ENCODE measurements at regions of chr9 and their contacts with region 1.

Region 1: DNA sequence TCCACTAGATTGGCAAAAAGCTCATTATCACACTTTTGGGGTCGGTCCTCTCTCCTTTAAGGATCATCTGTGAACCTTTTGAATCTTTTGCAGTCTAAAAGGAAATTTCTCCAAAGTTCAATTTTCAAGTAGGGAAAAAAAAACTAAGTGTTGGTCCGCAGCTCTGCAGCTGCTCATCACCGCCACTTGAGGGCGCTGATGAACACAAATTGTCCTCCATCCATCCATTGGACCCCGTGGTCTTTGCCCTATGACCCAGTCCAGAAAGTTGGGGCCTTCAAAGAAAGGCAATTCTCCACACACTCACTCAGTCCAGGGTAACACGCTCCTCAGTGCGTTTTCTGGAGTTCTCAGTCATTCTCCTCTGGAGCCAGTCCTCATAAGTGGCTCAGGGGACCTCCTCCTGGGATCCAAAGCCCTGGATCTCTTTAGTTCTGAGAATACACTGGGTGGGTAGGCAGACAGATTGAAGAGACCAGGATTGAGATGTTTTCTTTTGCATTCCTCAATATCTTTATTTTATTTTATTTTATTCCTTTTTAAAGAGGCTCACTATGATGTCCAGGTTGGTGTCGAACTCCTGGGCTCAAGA is 63.6 kb upstream of the SLC28A3 start:
- DNase-seq: peak; percentile 32 to 48 (median 40)
- ATAC-seq: peak; percentile 77
- H3K4me3 ChIP-seq: no peak overlapping the region
- H3K27ac ChIP-seq: no peak overlapping the region
- H3K4me1 ChIP-seq: no peaks in the 10 kb centered on the region
- H3K27me3 ChIP-seq: no peaks in the 10 kb centered on the region
- CTCF ChIP-seq: peak; percentile 53 to 78 (median 70); a peak in 5 of 6 replicates
- EP300 ChIP-seq: no peak
- POLR2A ChIP-seq: no peak
- RAD21 ChIP-seq: peak; percentile 59 to 67

Region 2: GRCh38 chr9:84461540-84461939 is 57.3 kb after region 1 on chr9:
- CTCF ChIA-PET with region 1: no interaction called
- POLR2A ChIA-PET with region 1: interaction called, 3 read pairs
- in situ Hi-C with region 1: no loop called
- intact Hi-C with region 1: loop called (anchors 5 kb)
- DNase-seq: no peak
- ATAC-seq: no peak
- H3K4me3 ChIP-seq: no peak overlapping the region
- H3K27ac ChIP-seq: no peak overlapping the region
- H3K4me1 ChIP-seq: no peaks in the 10 kb centered on the region
- H3K27me3 ChIP-seq: no peaks in the 10 kb centered on the region
- CTCF ChIP-seq: no peak
- EP300 ChIP-seq: no peak
- POLR2A ChIP-seq: no peak
- RAD21 ChIP-seq: peak; percentile 19 to 43; a peak in 2 of 4 replicates

Region 3: GRCh38 chr9:84781458-84781857 is 377.3 kb after region 1 on chr9:
- CTCF ChIA-PET with region 1: no interaction called
- POLR2A ChIA-PET with region 1: no interaction called
- in situ Hi-C with region 1: no loop called
- intact Hi-C with region 1: loop called (anchors 10 kb)
- DNase-seq: peak in 2 of 4 experiments; percentile 3 to 5
- ATAC-seq: no peak
- H3K4me3 ChIP-seq: no peak overlapping the region
- H3K27ac ChIP-seq: no peak overlapping the region
- H3K4me1 ChIP-seq: no peaks in the 10 kb centered on the region
- H3K27me3 ChIP-seq: no peaks in the 10 kb centered on the region
- CTCF ChIP-seq: peak in 2 of 3 experiments; percentile 12 to 28; a peak in 2 of 6 replicates
- EP300 ChIP-seq: no peak
- POLR2A ChIP-seq: no peak
- RAD21 ChIP-seq: peak; percentile 24 to 41

Region 4: GRCh38 chr9:84953797-84954705 is 549.9 kb after region 1 on chr9:
- CTCF ChIA-PET with region 1: no interaction called
- POLR2A ChIA-PET with region 1: no interaction called
- in situ Hi-C with region 1: loop called (anchors 25 kb)
- intact Hi-C with region 1: loop called (anchors 5 kb)
- DNase-seq: peak; percentile 61 to 80 (median 74)
- ATAC-seq: peak; percentile 99
- H3K4me3 ChIP-seq: no peak overlapping the region
- H3K27ac ChIP-seq: no peak overlapping the region
- H3K4me1 ChIP-seq: no peaks in the 10 kb centered on the region
- H3K27me3 ChIP-seq: no peaks in the 10 kb centered on the region
- CTCF ChIP-seq: peak; percentile 70 to 81 (median 76)
- EP300 ChIP-seq: no peak
- POLR2A ChIP-seq: no peak
- RAD21 ChIP-seq: peak in 1 of 2 experiments; percentile 55; a peak in 2 of 4 replicates

Measured in K562 (cell line).